Heart left ventricle (tissue), 16 donors: ENCODE measurements at regions of chr4 and their contacts with region 1.

Region 1: GRCh38 chr4:127870688-127871087 is 10.0 kb upstream of the PLK4 start:
- DNase-seq: peak in 2 of 5 donors; percentile 46 to 48
- ATAC-seq: peak; percentile 55 to 97 (median 92)
- H3K4me3 ChIP-seq: peak overlapping the region in 1 of 12 donors; percentile 2
- H3K27ac ChIP-seq: peak overlapping the region in 10 of 12 donors; percentile 3 to 61 (median 34)
- H3K4me1 ChIP-seq: peaks cover 8 to 19% (median 15%) of the 10 kb centered on the region in 12 donors
- H3K27me3 ChIP-seq: no peaks in the 10 kb centered on the region
- CTCF ChIP-seq: no peak
- POLR2A ChIP-seq: no peak

Region 2: DNA sequence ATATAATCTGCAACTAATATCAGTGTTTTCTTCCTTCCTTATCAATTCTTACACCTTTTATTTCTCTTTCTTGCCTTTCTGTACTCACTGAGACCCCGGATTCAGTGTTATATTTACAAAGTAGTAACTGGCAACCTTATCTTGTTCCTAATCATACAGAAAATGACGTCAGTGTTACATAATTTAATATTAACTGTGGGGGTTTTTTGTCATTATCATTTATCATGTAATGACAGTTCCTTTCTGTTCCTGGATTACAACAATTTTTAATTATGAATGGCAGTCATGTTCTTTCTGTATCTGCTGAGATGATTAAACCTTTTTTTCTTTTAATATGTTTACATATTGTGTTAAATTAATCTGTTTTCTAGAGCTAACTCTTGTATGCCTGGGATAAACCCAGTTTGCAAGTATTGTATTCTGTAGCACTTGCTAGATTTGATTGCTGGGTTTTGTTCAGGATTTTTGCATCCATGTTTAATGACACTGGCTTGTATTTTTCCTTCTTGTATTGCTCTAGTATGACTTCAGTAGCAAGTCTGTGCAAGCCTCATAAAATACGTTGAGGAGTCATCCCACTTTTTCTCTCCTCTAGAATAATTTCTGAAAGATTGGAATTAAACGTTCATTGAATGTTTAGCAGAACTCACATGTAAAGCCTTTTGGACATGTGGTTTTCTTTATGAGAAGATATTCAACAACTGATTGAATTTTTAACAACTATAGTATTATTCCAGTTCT is 99.0 kb before region 1 on chr4:
- intact Hi-C with region 1: no loop called
- DNase-seq: no peak
- ATAC-seq: no peak
- H3K4me3 ChIP-seq: no peak overlapping the region
- H3K27ac ChIP-seq: no peak overlapping the region
- H3K4me1 ChIP-seq: no peaks in the 10 kb centered on the region
- H3K27me3 ChIP-seq: peaks cover 0 to 9% (median 0%) of the 10 kb centered on the region in 9 donors
- CTCF ChIP-seq: no peak
- POLR2A ChIP-seq: no peak

Region 3: DNA sequence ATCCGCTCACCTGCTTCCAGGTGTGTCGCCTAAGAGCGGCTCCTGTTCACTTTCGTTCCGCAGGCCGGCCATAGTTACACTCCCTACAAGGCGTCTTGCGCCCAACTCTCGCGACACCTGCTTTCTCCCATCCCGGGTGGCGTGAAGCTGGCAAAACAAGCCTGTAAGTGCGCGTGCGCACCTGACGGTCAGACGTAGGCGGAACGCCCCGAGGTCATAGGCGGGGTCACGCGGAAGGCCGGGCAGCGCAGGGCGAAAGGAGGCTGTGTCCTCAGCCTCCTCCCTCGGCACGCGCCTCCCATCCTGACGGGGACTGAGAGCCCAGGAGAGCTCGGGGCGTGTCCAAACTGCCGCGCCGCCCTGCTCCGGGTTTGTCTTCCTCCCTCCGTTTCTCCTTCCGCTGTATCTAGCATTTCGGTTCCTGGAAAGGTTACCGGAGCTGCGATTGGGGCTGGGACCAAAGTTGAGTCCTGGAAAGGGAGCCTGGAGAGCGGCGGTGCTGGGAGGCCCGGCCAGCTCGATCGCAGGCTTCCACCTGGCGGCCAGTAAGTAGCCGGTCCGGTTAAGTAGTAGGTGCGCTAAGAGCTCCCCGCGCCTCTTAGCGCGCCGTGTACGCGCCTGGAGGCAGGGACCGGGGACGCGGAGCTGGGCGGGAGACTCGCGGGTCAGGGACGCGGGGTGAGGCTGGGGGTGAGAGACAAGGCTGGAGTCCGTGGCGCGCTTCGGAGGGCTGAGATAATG is 94.5 kb after region 1 on chr4 and contains the starts of genes ABHD18 and MFSD8:
- intact Hi-C with region 1: loop called in 1 of 10 experiments (anchors 5 kb)
- DNase-seq: peak; percentile 98 to 100 (median 100)
- ATAC-seq: peak; percentile 95 to 99 (median 98)
- H3K4me3 ChIP-seq: peak within 1 kb of the TSS; percentile 73 to 94 (median 80)
- H3K27ac ChIP-seq: peak within 1 kb of the TSS; percentile 85 to 97 (median 94)
- H3K4me1 ChIP-seq: peaks cover 0 to 46% (median 16%) of the 10 kb centered on the region in 12 donors
- H3K27me3 ChIP-seq: no peaks in the 10 kb centered on the region
- CTCF ChIP-seq: peak in 11 of 12 donors; percentile 8 to 60 (median 47)
- POLR2A ChIP-seq: peak in 1 of 2 donors; percentile 70
- total RNA-seq, gene ABHD18: 6.3 to 56.3 (median 21.0) TPM
- total RNA-seq, gene MFSD8: 6.1 to 17.4 (median 10.3) TPM

Region 4: GRCh38 chr4:128249787-128250668 is 379.3 kb after region 1 on chr4:
- intact Hi-C with region 1: no loop called
- DNase-seq: no peak
- ATAC-seq: no peak
- H3K4me3 ChIP-seq: no peak overlapping the region
- H3K27ac ChIP-seq: no peak overlapping the region
- H3K4me1 ChIP-seq: no peaks in the 10 kb centered on the region
- H3K27me3 ChIP-seq: no peaks in the 10 kb centered on the region
- CTCF ChIP-seq: no peak
- POLR2A ChIP-seq: no peak